ENCODE measurements at regions of chr9 and their contacts with region 1.

Region 1: DNA sequence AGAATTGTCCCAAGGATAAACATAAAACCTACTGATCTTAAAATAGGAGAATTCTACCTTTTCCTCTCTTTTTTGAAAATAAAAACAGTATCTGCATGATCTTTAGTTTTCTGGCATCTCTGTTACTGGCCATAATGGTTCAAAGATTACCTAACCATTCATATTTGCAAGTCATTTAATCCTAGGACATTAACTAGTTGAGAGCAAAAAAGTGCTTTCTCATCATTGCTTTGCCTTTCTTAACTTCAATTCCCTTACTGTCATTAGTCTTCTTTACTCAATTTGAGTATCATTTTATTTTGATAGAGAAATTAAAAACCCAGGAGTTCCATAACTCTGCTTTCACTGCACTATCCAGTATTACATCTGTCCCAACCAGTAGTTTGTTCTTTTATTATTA is 68.6 kb downstream of the RFX3 start:
- DNase-seq: no peak
- ATAC-seq: no peak
- H3K4me3 ChIP-seq: no peak overlapping the region
- H3K27ac ChIP-seq: no peak overlapping the region
- H3K4me1 ChIP-seq: peaks cover 27% of the 10 kb centered on the region
- H3K27me3 ChIP-seq: no peaks in the 10 kb centered on the region
- CTCF ChIP-seq: no peak

Region 2: DNA sequence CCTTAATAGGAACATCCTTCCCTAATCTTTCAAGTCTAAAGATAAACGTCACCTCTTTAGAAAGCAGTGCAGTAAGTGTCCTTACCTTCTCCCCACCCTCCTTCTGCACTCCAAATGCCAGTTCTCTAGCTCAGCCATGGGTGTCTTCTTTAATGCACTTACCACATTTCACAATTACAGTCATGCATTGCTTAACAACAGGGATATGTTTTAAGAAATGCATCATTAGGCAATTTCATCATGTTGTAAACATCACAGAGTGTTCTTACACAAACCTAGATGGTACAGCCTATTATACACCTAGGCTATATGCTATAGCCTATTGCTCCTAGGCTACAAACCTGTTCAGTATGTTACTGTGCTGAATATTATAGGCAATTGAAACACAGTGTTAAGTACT is 22.6 kb before region 1 on chr9:
- intact Hi-C with region 1: loop called in 1 of 2 experiments (anchors 1 kb)
- DNase-seq: no peak
- ATAC-seq: peak; percentile 61 to 87 (median 82)
- H3K4me3 ChIP-seq: peak overlapping the region; percentile 5
- H3K27ac ChIP-seq: no peak overlapping the region
- H3K4me1 ChIP-seq: peaks cover 29% of the 10 kb centered on the region
- H3K27me3 ChIP-seq: no peaks in the 10 kb centered on the region
- CTCF ChIP-seq: no peak

Region 3: DNA sequence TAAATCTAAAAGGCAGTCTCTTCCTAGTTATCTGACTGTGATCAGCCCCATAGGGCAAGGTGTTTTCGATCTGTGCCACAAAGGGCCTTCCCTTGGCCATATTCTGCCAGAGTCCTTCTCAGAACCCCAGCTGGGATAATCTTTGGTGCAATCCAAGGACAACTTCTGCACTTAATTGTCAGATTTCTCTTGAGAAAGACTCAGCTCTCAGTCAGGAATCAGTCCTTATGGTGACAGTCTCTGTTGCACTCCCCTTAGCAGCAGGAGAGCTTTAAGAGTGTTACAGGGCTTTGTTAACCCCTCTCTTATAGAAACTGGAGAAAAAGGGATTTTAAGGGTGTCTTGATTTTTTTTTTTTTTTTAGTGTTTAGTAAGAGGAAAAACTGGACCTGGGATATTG is 84.0 kb after region 1 on chr9:
- intact Hi-C with region 1: no loop called
- DNase-seq: no peak
- ATAC-seq: no peak
- H3K4me3 ChIP-seq: no peak overlapping the region
- H3K27ac ChIP-seq: no peak overlapping the region
- H3K4me1 ChIP-seq: no peaks in the 10 kb centered on the region
- H3K27me3 ChIP-seq: no peaks in the 10 kb centered on the region
- CTCF ChIP-seq: no peak

Region 4: DNA sequence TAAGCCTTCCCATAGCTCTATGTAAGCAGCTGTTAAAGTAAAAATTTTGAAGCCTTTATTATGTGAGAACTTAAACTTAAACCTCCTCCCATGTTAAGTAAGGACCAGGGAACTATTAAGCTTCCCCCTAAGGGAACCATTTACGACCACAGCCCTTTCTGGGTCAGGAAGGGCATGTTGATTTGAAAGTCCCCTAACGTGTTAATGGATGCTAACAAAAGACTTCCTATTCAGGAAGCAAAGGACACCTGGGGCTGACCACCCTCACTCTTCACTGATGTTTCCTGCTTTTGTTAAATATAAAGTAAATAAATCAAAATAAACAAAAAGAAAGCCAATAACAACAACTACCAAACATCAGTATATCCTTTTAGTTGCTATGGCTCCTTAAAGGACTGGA is 239.2 kb after region 1 on chr9:
- intact Hi-C with region 1: no loop called
- DNase-seq: no peak
- ATAC-seq: no peak
- H3K4me3 ChIP-seq: no peak overlapping the region
- H3K27ac ChIP-seq: no peak overlapping the region
- H3K4me1 ChIP-seq: no peaks in the 10 kb centered on the region
- H3K27me3 ChIP-seq: no peaks in the 10 kb centered on the region
- CTCF ChIP-seq: no peak